Mucosa of descending colon (tissue), 3 donors: ENCODE measurements at regions of chr6 and their contacts with region 1.

Region 1: GRCh38 chr6:39377539-39377950 is 55.0 kb upstream of the KCNK16 start:
- DNase-seq: peak in 2 of 3 donors; percentile 50 to 76
- ATAC-seq: peak; percentile 80
- H3K4me3 ChIP-seq: no peak overlapping the region
- H3K4me1 ChIP-seq: no peaks in the 10 kb centered on the region
- CTCF ChIP-seq: peak; percentile 30

Region 2: GRCh38 chr6:39440039-39440426 is 62.5 kb after region 1 on chr6:
- intact Hi-C with region 1: no loop called
- DNase-seq: no peak
- ATAC-seq: no peak
- H3K4me3 ChIP-seq: no peak overlapping the region
- H3K4me1 ChIP-seq: no peaks in the 10 kb centered on the region
- CTCF ChIP-seq: no peak

Region 3: GRCh38 chr6:39892490-39893129 is 515.1 kb after region 1 on chr6:
- intact Hi-C with region 1: loop called (anchors 5 to 10 kb)
- DNase-seq: peak in 2 of 3 donors; percentile 78 to 79
- ATAC-seq: peak; percentile 87
- H3K4me3 ChIP-seq: no peak overlapping the region
- H3K4me1 ChIP-seq: no peaks in the 10 kb centered on the region
- CTCF ChIP-seq: peak; percentile 26